ENCODE measurements at regions of chr18 and their contacts with region 1.

Region 1: GRCh38 chr18:62714671-62715435 is 488 bp upstream of the PHLPP1 start:
- DNase-seq: peak; percentile 100

Region 2: DNA sequence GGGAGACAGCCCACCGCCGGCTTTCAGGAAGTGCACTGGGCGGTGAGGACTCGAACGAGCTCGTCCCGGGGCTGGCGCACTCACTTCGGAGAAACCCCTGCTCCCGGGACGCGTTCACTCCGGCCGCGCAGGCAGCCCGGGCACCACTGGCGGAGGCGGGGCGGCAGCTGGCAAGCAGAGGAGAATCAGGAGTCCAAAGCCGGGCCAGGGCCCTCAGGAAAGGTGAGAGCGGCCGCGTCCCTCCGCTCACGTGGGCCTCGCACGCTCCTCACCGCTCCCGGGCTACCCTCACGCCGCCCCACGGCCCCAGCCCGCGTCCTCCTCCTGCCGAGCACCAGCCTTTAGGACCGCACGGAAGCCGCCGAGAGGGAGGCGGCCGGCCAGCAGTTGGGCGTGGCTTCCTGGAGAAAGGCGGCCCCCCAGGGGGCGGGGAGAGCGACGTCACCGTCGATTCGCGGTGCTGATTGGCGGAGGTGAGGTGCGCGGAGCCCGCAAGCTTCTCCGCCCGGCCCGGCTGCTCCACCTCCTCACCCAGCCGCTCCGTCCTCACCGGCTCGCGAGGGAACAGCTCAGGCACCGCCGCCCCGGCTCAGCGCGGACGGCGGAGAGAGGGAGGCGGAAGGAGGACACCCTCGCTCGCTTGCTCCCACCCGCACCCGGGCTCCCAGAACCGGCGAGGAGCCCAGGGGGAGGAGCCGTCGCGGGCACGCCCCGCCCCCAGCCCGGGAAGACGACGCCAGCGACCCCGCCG is 192.2 kb before region 1 on chr18 and contains the start of gene ZCCHC2:
- intact Hi-C with region 1: loop called (anchors 2 kb)
- DNase-seq: peak; percentile 99
- total RNA-seq, gene ZCCHC2: 19.1 TPM

Region 3: DNA sequence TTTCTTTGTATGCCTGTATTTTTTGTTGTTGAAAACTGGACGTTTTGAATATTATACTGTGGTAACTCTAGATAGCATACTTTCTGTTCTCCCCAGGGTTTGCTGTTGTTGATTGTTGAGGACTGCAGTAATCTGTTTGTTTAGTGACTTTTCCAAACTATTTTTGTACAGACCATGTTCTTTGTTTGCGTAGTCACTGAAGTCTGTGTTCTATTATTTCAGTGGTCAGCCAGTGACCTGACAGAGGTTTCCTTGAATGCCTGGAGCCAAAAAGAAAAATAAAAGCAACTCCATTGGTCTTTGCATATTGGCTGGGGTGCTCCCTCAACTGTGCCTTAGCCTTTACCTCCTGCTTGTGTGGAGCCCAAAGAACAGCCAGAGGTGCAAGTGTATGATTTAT is 42.3 kb before region 1 on chr18:
- intact Hi-C with region 1: no loop called
- DNase-seq: no peak

Region 4: GRCh38 chr18:62802523-62802922 is 87.7 kb after region 1 on chr18:
- intact Hi-C with region 1: loop called (anchors 5 kb)
- DNase-seq: no peak

Region 5: GRCh38 chr18:62877411-62878221 is 162.8 kb after region 1 on chr18:
- intact Hi-C with region 1: loop called (anchors 5 kb)
- DNase-seq: no peak

Region 6: DNA sequence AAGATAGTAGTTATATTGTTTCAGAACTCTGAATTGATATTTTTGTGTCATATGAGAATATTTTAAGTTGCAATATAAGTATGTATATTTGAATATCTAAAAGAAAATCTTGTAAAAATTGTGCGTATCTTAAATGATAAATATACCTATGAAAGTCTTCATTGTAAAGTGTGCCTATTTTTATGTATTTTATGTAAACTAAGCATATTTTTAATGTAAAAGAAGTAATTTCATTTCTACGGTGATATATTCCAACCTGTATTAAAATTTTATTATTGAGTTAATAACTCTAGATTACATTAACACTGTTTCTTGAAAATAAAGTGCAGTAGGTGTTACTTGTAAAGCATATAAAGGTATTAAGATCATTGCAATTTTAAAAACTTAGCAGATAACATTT is 233.9 kb after region 1 on chr18:
- intact Hi-C with region 1: no loop called
- DNase-seq: no peak

Region 7: DNA sequence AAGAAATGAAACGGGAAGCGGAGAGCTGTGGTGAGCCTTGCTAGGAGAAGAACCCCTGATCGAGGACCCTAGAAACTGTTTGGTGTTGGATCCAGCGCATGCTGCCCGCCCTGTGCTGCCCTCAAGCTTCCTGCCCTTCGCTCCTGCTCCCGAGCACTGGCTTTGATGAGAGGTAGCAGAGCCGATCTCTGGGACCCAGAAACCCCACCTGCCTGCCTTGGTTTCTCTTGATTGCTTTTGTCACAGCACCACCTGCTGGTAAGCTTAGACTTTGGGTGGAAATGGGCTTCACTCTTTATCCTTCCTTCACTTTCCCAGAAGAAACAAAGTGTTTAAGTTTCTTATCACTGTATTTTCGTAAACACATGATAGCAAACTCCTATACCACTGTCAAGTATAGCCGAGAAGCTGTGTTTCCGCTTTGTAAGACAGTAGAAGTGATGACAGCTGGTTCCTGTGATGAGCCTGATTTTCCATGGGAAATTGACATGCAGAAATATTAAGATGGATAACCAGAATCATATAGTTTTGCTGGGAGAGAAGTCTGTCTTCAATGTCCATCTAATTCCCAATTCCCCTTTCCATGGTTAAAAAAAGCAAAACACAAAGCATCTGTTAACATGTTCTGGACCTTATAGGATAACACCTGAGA is 267.9 kb after region 1 on chr18:
- intact Hi-C with region 1: loop called (anchors 1 kb)
- DNase-seq: no peak